ENCODE measurements at regions of chr3 and their contacts with region 1.

Region 1: DNA sequence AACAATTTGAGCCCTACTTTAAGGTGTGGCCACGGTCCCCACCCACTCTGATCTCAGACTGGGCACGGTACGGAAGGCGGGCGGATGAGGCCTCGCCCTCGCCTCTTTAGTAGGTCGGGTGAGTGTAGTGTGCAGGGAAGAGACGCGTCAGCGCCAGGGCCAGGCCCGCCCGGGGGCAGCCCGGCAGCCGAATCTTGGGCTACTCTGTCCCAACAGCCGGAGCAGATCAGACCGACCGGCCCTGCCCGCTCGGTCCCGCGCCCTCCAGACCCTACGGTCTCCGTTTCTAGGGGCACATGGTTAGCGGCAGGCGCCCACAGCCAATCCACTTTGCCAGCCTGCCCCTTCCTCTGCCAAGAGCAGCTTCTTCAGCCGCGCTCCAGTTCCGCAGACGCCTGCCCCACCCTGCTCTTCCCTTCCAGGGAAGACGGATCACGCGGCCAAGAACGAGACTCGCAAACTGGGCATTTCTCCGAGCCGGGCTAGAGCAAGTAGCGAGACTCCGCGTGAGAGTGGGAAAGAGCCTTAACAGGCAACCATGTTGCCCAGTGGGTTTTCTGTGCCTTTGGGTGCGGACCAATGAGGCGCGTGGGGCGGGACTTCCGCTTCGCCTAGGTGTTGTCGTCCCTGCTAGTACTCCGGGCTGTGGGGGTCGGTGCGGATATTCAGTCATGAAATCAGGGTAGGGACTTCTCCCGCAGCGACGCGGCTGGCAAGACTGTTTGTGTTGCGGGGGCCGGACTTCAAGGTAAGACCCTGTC is at the start of gene RNF13:
- DNase-seq: peak; percentile 87
- ATAC-seq: peak; percentile 94
- H3K4me3 ChIP-seq: peak within 1 kb of the TSS; percentile 80
- H3K27ac ChIP-seq: peak within 1 kb of the TSS; percentile 93
- H3K4me1 ChIP-seq: no peaks in the 10 kb centered on the region
- H3K27me3 ChIP-seq: no peaks in the 10 kb centered on the region
- CTCF ChIP-seq: no peak
- EP300 ChIP-seq: no peak
- POLR2A ChIP-seq: peak; percentile 83
- RAD21 ChIP-seq: no peak
- polyA plus RNA-seq, gene RNF13: 38.7 to 45.9 TPM

Region 2: DNA sequence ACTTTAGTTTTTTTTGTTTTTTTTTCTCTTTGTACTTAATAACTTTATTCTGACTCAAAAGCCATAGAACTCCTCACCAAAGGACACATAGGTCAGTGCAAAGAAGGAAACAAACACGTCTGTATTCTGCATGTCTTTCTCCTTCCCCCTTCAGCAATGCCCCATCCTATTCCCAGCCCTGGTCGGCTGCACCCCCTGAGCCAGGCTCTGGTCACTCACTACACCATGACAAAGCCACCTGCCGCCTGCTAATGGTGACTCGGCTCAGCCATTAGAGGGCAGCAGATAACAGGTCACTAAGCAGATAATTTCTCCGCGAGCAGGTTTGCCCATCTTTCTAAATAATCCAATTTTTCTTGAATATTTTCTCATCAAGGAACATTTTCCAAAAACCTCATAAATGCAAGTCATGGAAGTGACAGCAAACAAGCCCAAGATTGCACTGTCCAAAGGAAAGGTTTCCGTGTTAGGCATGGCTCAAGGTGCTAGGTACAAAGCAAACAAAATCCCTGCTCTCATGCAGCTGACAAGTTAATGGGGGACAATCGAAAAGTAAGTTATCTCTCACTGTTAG is 300.5 kb before region 1 on chr3:
- CTCF ChIA-PET with region 1: interaction called, 19 read pairs
- POLR2A ChIA-PET with region 1: no interaction called
- RAD21 ChIA-PET with region 1: interaction called, 4 read pairs
- SMC1A ChIA-PET with region 1: interaction called, 18 read pairs
- in situ Hi-C with region 1: no loop called
- intact Hi-C with region 1: no loop called
- DNase-seq: no peak
- ATAC-seq: peak; percentile 92
- H3K4me3 ChIP-seq: no peak overlapping the region
- H3K27ac ChIP-seq: no peak overlapping the region
- H3K4me1 ChIP-seq: no peaks in the 10 kb centered on the region; the same call in 1 of the 2 replicates
- H3K27me3 ChIP-seq: no peaks in the 10 kb centered on the region
- CTCF ChIP-seq: peak; percentile 81 to 85 (median 84); a peak in 5 of 6 replicates
- EP300 ChIP-seq: no peak
- POLR2A ChIP-seq: no peak
- RAD21 ChIP-seq: peak; percentile 93

Region 3: DNA sequence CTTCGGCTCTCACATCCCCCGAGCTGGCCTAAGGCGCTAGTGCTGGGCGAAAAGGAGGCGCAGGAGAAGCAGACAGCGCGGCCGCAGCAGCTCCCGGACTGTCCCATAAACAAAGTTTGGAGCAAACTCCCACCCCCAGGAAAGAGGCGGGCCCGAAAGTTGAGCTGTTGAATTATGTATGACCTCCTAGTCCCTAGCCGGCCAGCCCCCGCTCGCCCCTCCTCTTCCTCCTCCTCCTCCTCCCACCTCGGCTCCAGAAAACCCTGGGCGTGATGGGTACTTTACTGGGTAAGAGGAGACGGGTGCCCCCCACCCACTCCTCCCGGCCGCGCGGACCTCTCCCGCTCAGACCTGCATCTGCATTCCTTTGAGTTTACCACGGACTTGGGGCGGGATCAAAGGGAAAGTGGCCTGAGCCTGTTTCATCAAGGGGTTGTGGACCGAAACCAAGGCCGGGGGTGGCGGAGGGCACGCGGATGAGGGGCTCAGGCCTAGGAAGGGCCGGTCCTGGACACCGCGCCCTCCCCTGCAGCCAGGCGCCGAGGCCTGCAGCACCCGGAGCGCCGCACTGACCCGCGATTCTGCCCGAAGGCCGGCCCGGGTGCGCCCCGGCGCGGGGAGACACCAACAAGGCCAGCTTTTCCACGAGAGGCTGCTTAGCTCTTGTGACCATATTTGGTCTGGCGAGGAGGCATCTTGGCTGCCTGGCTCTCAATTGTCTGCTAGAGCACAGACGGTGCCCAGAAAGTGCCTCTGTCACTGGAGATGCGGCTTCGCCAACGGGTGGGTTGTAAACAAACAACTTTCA is 154.7 kb before region 1 on chr3 and contains the start of gene WWTR1:
- CTCF ChIA-PET with region 1: interaction called, 4 read pairs
- POLR2A ChIA-PET with region 1: no interaction called
- RAD21 ChIA-PET with region 1: interaction called, 5 read pairs
- SMC1A ChIA-PET with region 1: no interaction called
- in situ Hi-C with region 1: no loop called
- intact Hi-C with region 1: loop called (anchors 5 kb)
- DNase-seq: peak; percentile 54
- ATAC-seq: peak; percentile 85
- H3K4me3 ChIP-seq: peak within 1 kb of the TSS; percentile 87
- H3K27ac ChIP-seq: peak within 1 kb of the TSS; percentile 97
- H3K4me1 ChIP-seq: peaks cover 10% of the 10 kb centered on the region
- H3K27me3 ChIP-seq: no peaks in the 10 kb centered on the region
- CTCF ChIP-seq: peak; percentile 23 to 52 (median 43); a peak in 5 of 6 replicates
- EP300 ChIP-seq: 0 out of 4 replicates have a peak, but pooled peaks of 1 of the 2 experiments have one; percentile 18
- POLR2A ChIP-seq: peak; percentile 77
- RAD21 ChIP-seq: peak; percentile 54
- polyA plus RNA-seq, gene WWTR1: 3.8 to 4.0 TPM

Region 4: GRCh38 chr3:149771652-149772271 is 41.0 kb before region 1 on chr3:
- CTCF ChIA-PET with region 1: interaction called, 126 read pairs
- POLR2A ChIA-PET with region 1: interaction called, 3 read pairs
- RAD21 ChIA-PET with region 1: interaction called, 20 read pairs
- SMC1A ChIA-PET with region 1: interaction called, 22 read pairs
- in situ Hi-C with region 1: no loop called
- intact Hi-C with region 1: loop called (anchors 5 kb)
- DNase-seq: no peak
- ATAC-seq: peak; percentile 93
- H3K4me3 ChIP-seq: no peak overlapping the region
- H3K27ac ChIP-seq: no peak overlapping the region
- H3K4me1 ChIP-seq: no peaks in the 10 kb centered on the region
- H3K27me3 ChIP-seq: no peaks in the 10 kb centered on the region; a peak in 1 of 4 replicates
- CTCF ChIP-seq: peak; percentile 79 to 83 (median 79)
- EP300 ChIP-seq: no peak
- POLR2A ChIP-seq: no peak
- RAD21 ChIP-seq: peak; percentile 72

Region 5: GRCh38 chr3:149792452-149793270 is 20.1 kb before region 1 on chr3 and contains the start of gene ANKUB1:
- CTCF ChIA-PET with region 1: interaction called, 24 read pairs
- POLR2A ChIA-PET with region 1: no interaction called
- RAD21 ChIA-PET with region 1: interaction called, 5 read pairs
- SMC1A ChIA-PET with region 1: interaction called, 8 read pairs
- in situ Hi-C with region 1: no loop called
- intact Hi-C with region 1: no loop called
- DNase-seq: no peak
- ATAC-seq: no peak
- H3K4me3 ChIP-seq: no peak within 1 kb of the TSS
- H3K27ac ChIP-seq: no peak within 1 kb of the TSS
- H3K4me1 ChIP-seq: no peaks in the 10 kb centered on the region
- H3K27me3 ChIP-seq: peaks cover 0 to 4% of the 10 kb centered on the region in 2 experiments; a peak in 1 of 4 replicates
- CTCF ChIP-seq: no peak
- EP300 ChIP-seq: no peak
- POLR2A ChIP-seq: no peak
- RAD21 ChIP-seq: no peak
- polyA plus RNA-seq, gene ANKUB1: not detected

Region 6: GRCh38 chr3:149936812-149937233 is 124.0 kb after region 1 on chr3:
- CTCF ChIA-PET with region 1: interaction called, 16 read pairs
- POLR2A ChIA-PET with region 1: no interaction called
- RAD21 ChIA-PET with region 1: interaction called, 3 read pairs
- SMC1A ChIA-PET with region 1: interaction called, 4 read pairs
- in situ Hi-C with region 1: no loop called
- intact Hi-C with region 1: no loop called
- DNase-seq: peak; percentile 37
- ATAC-seq: peak; percentile 93
- H3K4me3 ChIP-seq: no peak overlapping the region
- H3K27ac ChIP-seq: no peak overlapping the region
- H3K4me1 ChIP-seq: no peaks in the 10 kb centered on the region
- H3K27me3 ChIP-seq: no peaks in the 10 kb centered on the region
- CTCF ChIP-seq: peak; percentile 79 to 87 (median 82)
- EP300 ChIP-seq: no peak
- POLR2A ChIP-seq: no peak
- RAD21 ChIP-seq: peak; percentile 80

Measured in GM12878 (cell line).